ENCODE measurements at regions of chr20 and their contacts with region 1.

Region 1: GRCh38 chr20:31712564-31713311 is 9.9 kb downstream of the BCL2L1 start:
- DNase-seq: peak; percentile 66 to 91
- ATAC-seq: peak; percentile 81 to 94 (median 90)
- H3K4me3 ChIP-seq: peak overlapping the region in 9 of 10 donors; percentile 10 to 43 (median 33)
- H3K27ac ChIP-seq: peak overlapping the region; percentile 88 to 100 (median 96)
- H3K4me1 ChIP-seq: peaks cover 44 to 100% (median 97%) of the 10 kb centered on the region in 9 donors
- H3K27me3 ChIP-seq: no peaks in the 10 kb centered on the region
- CTCF ChIP-seq: no peak

Region 2: GRCh38 chr20:31560094-31560899 is 152.4 kb before region 1 on chr20:
- intact Hi-C with region 1: loop called in 2 of 10 experiments (anchors 10 kb)
- DNase-seq: peak; percentile 57 to 66
- ATAC-seq: peak in 6 of 8 donors; percentile 17 to 39 (median 23)
- H3K4me3 ChIP-seq: no peak overlapping the region
- H3K27ac ChIP-seq: peak overlapping the region in 2 of 10 donors; percentile 50 to 72
- H3K4me1 ChIP-seq: peaks cover 0 to 27% (median 5%) of the 10 kb centered on the region in 9 donors
- H3K27me3 ChIP-seq: no peaks in the 10 kb centered on the region
- CTCF ChIP-seq: peak; percentile 76 to 91 (median 86)

Region 3: DNA sequence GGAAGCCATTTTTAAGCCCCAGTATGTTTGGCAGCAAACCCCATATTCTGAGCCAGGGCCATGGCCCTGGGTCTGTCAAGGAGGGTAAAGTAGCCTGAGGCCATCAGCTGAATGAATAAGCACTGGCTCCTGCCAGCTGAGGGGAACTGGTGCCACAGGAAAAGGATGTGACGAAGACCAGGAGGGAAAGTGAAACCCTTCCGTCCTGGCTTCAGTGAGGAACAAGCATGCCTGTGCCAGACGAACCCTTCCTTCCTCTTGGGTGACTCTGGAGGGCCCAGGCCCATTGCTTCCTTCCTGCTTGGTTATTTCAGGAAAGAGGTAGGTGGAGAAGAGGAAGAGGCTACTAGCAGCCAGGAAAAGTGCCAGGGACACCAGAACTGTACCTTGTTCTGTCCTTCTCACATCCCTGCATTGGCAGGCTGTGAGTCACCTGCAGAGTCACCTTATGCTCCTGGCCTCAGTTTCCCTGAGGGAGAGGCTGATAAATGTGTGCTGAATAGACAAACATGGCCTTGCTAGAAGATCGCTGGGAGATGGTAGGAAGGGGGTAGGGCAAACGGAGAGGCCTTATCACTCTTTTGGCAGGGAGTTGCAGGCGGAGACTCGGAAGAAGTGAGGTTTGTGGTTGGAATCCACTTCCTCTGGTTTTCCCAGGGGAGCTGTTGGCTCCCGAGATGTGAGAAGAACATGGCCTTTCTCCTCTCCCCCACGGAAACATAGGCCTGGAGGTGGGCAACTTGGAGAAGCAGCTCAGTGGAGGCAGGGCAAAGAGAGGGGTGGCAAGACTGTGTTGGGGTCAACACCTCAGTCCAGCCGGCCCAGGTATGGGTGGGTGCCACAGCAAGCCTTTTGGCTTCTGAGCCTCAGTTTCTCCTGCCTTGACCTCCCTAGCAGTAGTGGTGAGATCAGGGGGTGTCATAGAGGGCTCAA is 37.6 kb before region 1 on chr20:
- intact Hi-C with region 1: loop called in 6 of 10 experiments (anchors 1 to 5 kb)
- DNase-seq: peak; percentile 41 to 81
- ATAC-seq: peak; percentile 46 to 78 (median 68)
- H3K4me3 ChIP-seq: peak overlapping the region in 4 of 10 donors; percentile 1 to 52 (median 16)
- H3K27ac ChIP-seq: peak overlapping the region; percentile 47 to 92 (median 84)
- H3K4me1 ChIP-seq: peaks cover 59 to 100% (median 100%) of the 10 kb centered on the region in 9 donors
- H3K27me3 ChIP-seq: no peaks in the 10 kb centered on the region
- CTCF ChIP-seq: no peak

Measured in heart right ventricle (tissue), 16 donors.